Activated B cell treated with CpG ODN at 0.5 μM for 24 hours (primary cell): ENCODE measurements at regions of chr21 and their contacts with region 1.

Region 1: DNA sequence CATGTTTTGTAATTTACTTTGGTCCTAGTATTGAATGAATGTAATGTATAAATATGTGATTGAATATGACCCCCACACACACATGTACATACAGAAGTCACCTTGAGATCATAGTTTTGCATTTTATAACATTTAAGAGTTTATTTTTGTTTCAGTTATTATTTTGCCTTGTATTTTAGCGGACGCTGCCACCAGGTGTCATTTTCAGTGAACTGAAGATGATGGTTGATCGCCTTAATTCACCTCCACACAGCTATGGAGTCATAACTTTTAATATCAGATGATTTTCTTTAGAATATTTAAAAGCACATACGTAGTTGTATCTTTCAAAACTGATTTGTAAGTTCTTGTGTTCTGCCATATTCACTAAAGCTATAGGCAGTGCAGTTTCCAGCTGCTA is 130.4 kb downstream of the DYRK1A start:
- DNase-seq: no peak
- ATAC-seq: no peak
- H3K4me3 Mint-ChIP-seq: no peak overlapping the region
- H3K27ac Mint-ChIP-seq: no peak overlapping the region
- H3K4me1 Mint-ChIP-seq: peaks cover 2% of the 10 kb centered on the region
- H3K27me3 Mint-ChIP-seq: no peaks in the 10 kb centered on the region
- CTCF ChIP-seq: no peak

Region 2: GRCh38 chr21:36989699-36990507 is 507.1 kb before region 1 on chr21:
- CTCF ChIA-PET with region 1: no interaction called
- POLR2A ChIA-PET with region 1: no interaction called
- intact Hi-C with region 1: no loop called
- DNase-seq: peak; percentile 91
- ATAC-seq: peak; percentile 92
- H3K4me3 Mint-ChIP-seq: peak overlapping the region; percentile 83
- H3K27ac Mint-ChIP-seq: peak overlapping the region; percentile 80
- H3K4me1 Mint-ChIP-seq: peaks cover 10% of the 10 kb centered on the region
- H3K27me3 Mint-ChIP-seq: no peaks in the 10 kb centered on the region
- CTCF ChIP-seq: peak; percentile 27

Region 3: GRCh38 chr21:37220981-37221664 is 275.8 kb before region 1 on chr21:
- CTCF ChIA-PET with region 1: no interaction called
- POLR2A ChIA-PET with region 1: no interaction called
- intact Hi-C with region 1: loop called (anchors 2 kb)
- DNase-seq: peak; percentile 90
- ATAC-seq: peak; percentile 87
- H3K4me3 Mint-ChIP-seq: peak overlapping the region; percentile 91
- H3K27ac Mint-ChIP-seq: peak overlapping the region; percentile 88
- H3K4me1 Mint-ChIP-seq: peaks cover 31% of the 10 kb centered on the region
- H3K27me3 Mint-ChIP-seq: no peaks in the 10 kb centered on the region
- CTCF ChIP-seq: no peak

Region 4: GRCh38 chr21:37452227-37452626 is 44.7 kb before region 1 on chr21:
- CTCF ChIA-PET with region 1: no interaction called
- POLR2A ChIA-PET with region 1: no interaction called
- intact Hi-C with region 1: loop called (anchors 1 kb)
- DNase-seq: no peak
- ATAC-seq: no peak
- H3K4me3 Mint-ChIP-seq: no peak overlapping the region
- H3K27ac Mint-ChIP-seq: peak overlapping the region; percentile 18
- H3K4me1 Mint-ChIP-seq: peaks cover 65% of the 10 kb centered on the region
- H3K27me3 Mint-ChIP-seq: no peaks in the 10 kb centered on the region
- CTCF ChIP-seq: no peak

Region 5: DNA sequence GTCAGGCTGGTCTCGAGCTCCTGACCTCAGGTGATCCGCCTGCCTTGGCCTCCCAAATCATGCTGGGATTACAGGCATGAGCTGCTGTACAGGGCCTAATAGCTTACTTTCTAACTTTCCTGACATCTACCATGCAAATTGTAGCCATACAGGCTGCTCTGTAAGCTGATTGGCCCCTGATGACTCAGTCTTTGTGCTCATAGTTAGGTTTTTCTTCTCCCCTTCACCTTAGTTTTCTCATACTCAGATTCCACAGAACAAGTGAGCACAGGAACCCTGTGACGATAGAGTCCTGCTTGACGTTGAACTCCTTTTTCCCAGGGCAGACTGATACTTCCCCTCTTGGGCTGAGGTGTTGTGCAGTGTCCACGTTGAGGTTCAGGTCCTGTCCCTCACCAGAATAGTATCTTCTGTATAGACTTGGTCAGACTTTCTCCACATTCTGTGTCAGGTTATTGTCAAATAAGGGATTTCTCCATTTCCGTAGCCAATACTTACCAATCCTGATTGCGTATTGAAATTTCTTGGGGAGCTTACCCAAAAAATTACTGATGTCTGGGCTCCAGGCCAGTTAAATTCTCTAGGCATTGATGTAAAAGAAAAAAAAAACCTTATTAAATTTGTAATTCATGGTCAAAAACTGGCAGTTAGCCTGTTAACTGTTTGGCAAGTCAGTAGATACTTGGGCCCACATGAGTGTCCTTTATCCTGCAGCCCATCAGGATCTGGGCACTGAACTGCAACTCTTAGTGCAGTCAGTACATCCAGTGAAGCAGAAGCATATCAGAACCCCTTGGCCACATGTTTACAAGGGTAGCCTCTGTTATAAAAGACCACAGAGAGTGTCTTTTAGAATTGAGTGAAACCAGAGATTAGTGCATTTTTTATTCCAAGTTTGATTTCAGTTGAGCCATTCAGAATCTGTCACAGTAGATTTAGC is 12.2 kb before region 1 on chr21:
- CTCF ChIA-PET with region 1: interaction called, 3 read pairs
- POLR2A ChIA-PET with region 1: no interaction called
- intact Hi-C with region 1: loop called (anchors 2 kb)
- DNase-seq: no peak
- ATAC-seq: no peak
- H3K4me3 Mint-ChIP-seq: no peak overlapping the region
- H3K27ac Mint-ChIP-seq: no peak overlapping the region
- H3K4me1 Mint-ChIP-seq: no peaks in the 10 kb centered on the region
- H3K27me3 Mint-ChIP-seq: no peaks in the 10 kb centered on the region
- CTCF ChIP-seq: no peak